CD8-positive, alpha-beta T cell (primary cell): ENCODE measurements at regions of chr19 and their contacts with region 1.

Region 1: GRCh38 chr19:3132971-3133792 is 2.7 kb upstream of the GNA15 start:
- DNase-seq: peak; percentile 50 to 92 (median 68)
- ATAC-seq: peak; percentile 96
- H3K4me3 ChIP-seq: no peak overlapping the region
- H3K4me3 Mint-ChIP-seq: peak overlapping the region; percentile 66
- H3K27ac ChIP-seq: peak overlapping the region; percentile 30 to 60
- H3K27ac Mint-ChIP-seq: peak overlapping the region; percentile 68
- H3K4me1 ChIP-seq: peaks cover 17% of the 10 kb centered on the region
- H3K4me1 Mint-ChIP-seq: peaks cover 20% of the 10 kb centered on the region
- H3K27me3 ChIP-seq: peaks cover 0 to 3% of the 10 kb centered on the region in 2 experiments
- H3K27me3 Mint-ChIP-seq: peaks cover 8% of the 10 kb centered on the region
- CTCF ChIP-seq: no peak

Region 2: DNA sequence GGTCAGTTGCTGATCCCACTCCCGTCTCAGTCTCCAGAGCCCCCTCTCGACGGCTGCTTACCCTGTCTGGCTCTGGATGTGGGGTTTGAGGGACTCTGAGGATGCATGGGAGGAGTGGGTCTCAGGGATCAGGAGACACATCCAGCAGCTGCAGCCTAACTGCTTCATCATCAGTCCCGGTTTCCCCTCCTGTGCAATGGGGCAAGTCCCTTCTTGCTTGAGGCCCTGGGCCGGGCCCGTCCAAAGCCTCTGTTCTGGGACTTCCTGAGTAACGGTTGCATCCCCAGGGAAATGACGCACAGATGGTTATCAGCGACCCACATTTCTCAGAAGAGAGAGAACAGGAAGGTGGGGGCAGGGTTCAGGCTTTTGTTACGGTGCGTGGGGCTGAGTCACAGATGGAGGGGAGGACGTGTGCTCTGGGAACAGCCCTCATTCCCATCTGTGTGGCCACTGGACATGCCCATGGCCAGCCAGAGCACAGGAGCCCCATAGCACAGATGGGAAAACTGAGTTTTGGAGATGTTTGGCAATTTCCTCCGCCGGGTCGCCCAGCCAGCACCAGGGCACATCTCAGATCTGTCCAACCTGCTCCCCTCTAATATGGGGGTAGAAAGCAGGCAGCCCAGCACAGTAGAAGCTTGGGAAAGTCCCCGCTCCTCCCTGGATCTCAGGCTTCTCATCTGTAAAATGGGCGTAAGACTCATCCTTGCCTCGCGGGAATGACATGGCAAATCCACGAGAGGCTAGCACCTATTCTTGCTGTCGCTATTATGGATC is 22.0 kb after region 1 on chr19:
- CTCF ChIA-PET with region 1: interaction called, 104 read pairs
- POLR2A ChIA-PET with region 1: no interaction called
- intact Hi-C with region 1: loop called in 1 of 2 experiments (anchors 1 kb)
- DNase-seq: peak; percentile 57 to 92 (median 75)
- ATAC-seq: peak; percentile 91
- H3K4me3 ChIP-seq: peak overlapping the region in 1 of 2 experiments; percentile 12
- H3K4me3 Mint-ChIP-seq: peak overlapping the region; percentile 54
- H3K27ac ChIP-seq: peak overlapping the region; percentile 25 to 55
- H3K27ac Mint-ChIP-seq: peak overlapping the region; percentile 81
- H3K4me1 ChIP-seq: peaks cover 19% of the 10 kb centered on the region
- H3K4me1 Mint-ChIP-seq: no peaks in the 10 kb centered on the region
- H3K27me3 ChIP-seq: no peaks in the 10 kb centered on the region
- H3K27me3 Mint-ChIP-seq: no peaks in the 10 kb centered on the region
- CTCF ChIP-seq: no peak